CD8-positive, alpha-beta T cell (primary cell): ENCODE measurements at regions of chr17 and their contacts with region 1.

Region 1: GRCh38 chr17:75667021-75667790 is at the starts of genes RECQL5 and SAP30BP:
- DNase-seq: peak; percentile 95 to 99 (median 98)
- ATAC-seq: peak; percentile 100
- H3K4me3 ChIP-seq: peak within 1 kb of the TSS; percentile 78 to 85
- H3K4me3 Mint-ChIP-seq: peak within 1 kb of the TSS; percentile 58
- H3K27ac ChIP-seq: peak within 1 kb of the TSS; percentile 88 to 96
- H3K27ac Mint-ChIP-seq: no peak within 1 kb of the TSS
- H3K4me1 ChIP-seq: peaks cover 18% of the 10 kb centered on the region
- H3K4me1 Mint-ChIP-seq: peaks cover 33% of the 10 kb centered on the region
- H3K27me3 ChIP-seq: no peaks in the 10 kb centered on the region
- H3K27me3 Mint-ChIP-seq: no peaks in the 10 kb centered on the region
- CTCF ChIP-seq: no peak
- total RNA-seq, gene RECQL5: 11.2 to 13.2 TPM
- total RNA-seq, gene SAP30BP: 303 to 305 TPM

Region 2: GRCh38 chr17:75271233-75271954 is 395.8 kb before region 1 on chr17:
- CTCF ChIA-PET with region 1: no interaction called
- POLR2A ChIA-PET with region 1: no interaction called
- intact Hi-C with region 1: loop called in 1 of 2 experiments (anchors 2 kb)
- DNase-seq: peak; percentile 75 to 94 (median 88)
- ATAC-seq: peak; percentile 92
- H3K4me3 ChIP-seq: peak overlapping the region; percentile 84 to 93
- H3K4me3 Mint-ChIP-seq: peak overlapping the region; percentile 81
- H3K27ac ChIP-seq: peak overlapping the region; percentile 82 to 91
- H3K27ac Mint-ChIP-seq: peak overlapping the region; percentile 84
- H3K4me1 ChIP-seq: peaks cover 18% of the 10 kb centered on the region
- H3K4me1 Mint-ChIP-seq: peaks cover 25% of the 10 kb centered on the region
- H3K27me3 ChIP-seq: no peaks in the 10 kb centered on the region
- H3K27me3 Mint-ChIP-seq: no peaks in the 10 kb centered on the region
- CTCF ChIP-seq: peak; percentile 65

Region 3: DNA sequence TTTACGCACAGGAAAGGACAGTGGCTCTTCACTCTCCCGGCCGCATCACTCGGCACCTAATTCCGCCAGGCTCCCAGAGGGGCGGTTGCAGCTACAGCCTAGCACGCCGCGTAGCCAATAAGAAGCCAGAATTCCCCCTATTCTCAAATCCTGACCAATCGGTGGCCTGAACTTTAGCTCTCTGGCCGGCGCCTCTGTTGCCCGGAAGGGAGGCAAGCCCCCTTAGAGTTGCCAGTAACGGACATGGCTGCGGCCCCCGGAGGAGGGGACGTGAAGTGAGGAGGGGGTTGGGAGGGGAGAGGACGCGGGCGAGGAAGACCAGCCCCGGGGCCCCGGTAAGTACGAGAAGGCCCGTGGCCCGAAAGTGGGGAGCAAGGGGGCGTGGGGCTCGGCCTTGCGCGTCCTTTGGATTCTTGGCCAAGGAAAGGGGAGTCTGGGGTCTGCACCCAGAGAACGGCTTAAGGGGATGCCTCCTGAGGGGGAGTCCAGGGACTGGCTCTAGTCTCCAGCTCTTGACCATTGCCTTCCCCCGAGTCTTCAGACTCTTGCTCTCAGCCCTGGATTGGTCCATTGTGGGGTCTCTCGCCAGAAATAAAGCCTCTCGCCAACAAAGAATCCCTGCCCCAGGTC is 210.7 kb before region 1 on chr17 and contains the start of gene TMEM94:
- CTCF ChIA-PET with region 1: no interaction called
- POLR2A ChIA-PET with region 1: no interaction called
- intact Hi-C with region 1: loop called in 1 of 2 experiments (anchors 1 kb)
- DNase-seq: peak; percentile 80 to 98 (median 91)
- ATAC-seq: peak; percentile 97
- H3K4me3 ChIP-seq: peak within 1 kb of the TSS; percentile 100
- H3K4me3 Mint-ChIP-seq: peak within 1 kb of the TSS; percentile 96
- H3K27ac ChIP-seq: peak within 1 kb of the TSS; percentile 75 to 82
- H3K27ac Mint-ChIP-seq: peak within 1 kb of the TSS; percentile 92
- H3K4me1 ChIP-seq: peaks cover 16% of the 10 kb centered on the region
- H3K4me1 Mint-ChIP-seq: peaks cover 36% of the 10 kb centered on the region
- H3K27me3 ChIP-seq: no peaks in the 10 kb centered on the region
- H3K27me3 Mint-ChIP-seq: peaks cover 3% of the 10 kb centered on the region
- CTCF ChIP-seq: no peak
- total RNA-seq, gene TMEM94: 44.8 to 46.5 TPM

Region 4: GRCh38 chr17:76219670-76220383 is 552.6 kb after region 1 on chr17:
- CTCF ChIA-PET with region 1: no interaction called
- POLR2A ChIA-PET with region 1: no interaction called
- intact Hi-C with region 1: no loop called
- DNase-seq: no peak
- ATAC-seq: no peak
- H3K4me3 ChIP-seq: no peak overlapping the region
- H3K4me3 Mint-ChIP-seq: no peak overlapping the region
- H3K27ac ChIP-seq: no peak overlapping the region
- H3K27ac Mint-ChIP-seq: peak overlapping the region; percentile 27
- H3K4me1 ChIP-seq: no peaks in the 10 kb centered on the region
- H3K4me1 Mint-ChIP-seq: peaks cover 43% of the 10 kb centered on the region
- H3K27me3 ChIP-seq: no peaks in the 10 kb centered on the region
- H3K27me3 Mint-ChIP-seq: no peaks in the 10 kb centered on the region
- CTCF ChIP-seq: no peak